HEK293 (cell line): ENCODE measurements at regions of chr3 and their contacts with region 1.

Region 1: DNA sequence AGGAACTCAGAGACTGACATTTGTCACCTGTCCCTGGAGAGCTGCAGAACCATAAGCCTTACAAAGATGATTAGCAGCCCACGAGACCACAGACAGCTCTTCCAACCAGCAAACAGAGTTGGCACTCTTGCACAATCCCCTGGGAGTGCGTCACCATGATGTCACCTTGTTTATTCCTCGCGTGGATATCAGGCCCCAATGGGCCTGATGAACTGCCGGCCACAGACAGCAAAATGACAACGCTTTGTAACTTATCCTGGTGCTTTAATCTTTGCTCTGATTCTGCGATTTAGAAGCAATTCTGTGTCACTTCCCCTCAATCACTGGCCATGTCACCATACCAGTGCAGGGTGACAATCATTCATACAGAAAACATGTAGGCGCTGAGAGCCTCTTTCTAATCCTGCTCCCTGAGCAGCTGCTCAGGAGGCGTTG is 89.2 kb downstream of the TAMM41 start:
- H3K4me3 ChIP-seq: no peak overlapping the region
- H3K27ac ChIP-seq: no peak overlapping the region
- H3K4me1 ChIP-seq: no peaks in the 10 kb centered on the region
- CTCF ChIP-seq: no peak

Region 2: GRCh38 chr3:11643605-11644087 is 113.8 kb before region 1 on chr3 and contains the start of gene VGLL4:
- CTCF ChIA-PET with region 1: interaction called, 5 read pairs
- POLR2A ChIA-PET with region 1: interaction called, 10 read pairs
- H3K4me3 ChIP-seq: peak within 1 kb of the TSS; percentile 86
- H3K27ac ChIP-seq: peak within 1 kb of the TSS; percentile 95
- H3K4me1 ChIP-seq: peaks cover 12% of the 10 kb centered on the region
- CTCF ChIP-seq: no peak

Region 3: DNA sequence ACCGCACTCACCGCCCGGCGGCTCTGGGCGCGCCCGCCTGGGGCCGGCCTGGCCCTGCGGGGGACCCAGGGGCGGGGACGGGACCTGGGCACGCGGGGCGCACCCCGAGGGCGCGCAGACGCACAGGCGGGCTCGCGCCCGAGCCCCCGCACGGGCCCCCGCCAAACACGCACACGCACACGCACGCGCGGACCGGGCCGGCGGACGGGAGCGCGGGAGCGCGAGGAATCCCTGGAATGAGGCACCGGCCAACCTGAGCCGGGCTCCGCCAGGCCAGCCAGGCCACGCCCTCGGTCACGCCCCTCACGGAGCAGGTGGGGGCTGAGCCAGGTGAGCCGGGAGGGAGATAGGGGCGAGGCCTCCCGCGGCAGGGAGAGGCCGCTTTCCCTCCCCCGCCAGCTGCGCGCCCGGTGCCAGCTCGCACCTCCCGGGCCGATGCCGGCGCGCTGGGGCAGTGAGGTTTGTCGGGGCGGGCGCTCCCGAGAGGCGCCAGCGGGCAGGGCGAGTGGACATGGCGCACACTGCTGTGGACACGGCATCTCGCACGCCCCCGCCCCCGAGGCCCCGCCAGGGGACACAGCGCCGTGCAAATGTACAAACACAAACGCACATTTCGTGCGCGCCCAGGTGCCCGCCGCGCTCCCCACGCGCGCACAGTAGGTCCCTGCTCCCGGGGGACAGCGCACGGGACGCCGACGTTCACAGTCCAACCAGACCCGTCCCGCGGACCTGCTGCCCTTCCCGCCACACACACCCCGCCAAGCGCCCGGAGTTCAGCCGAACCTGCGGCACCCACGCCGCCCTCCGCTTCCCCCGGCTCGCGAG is 37.8 kb before region 1 on chr3:
- CTCF ChIA-PET with region 1: no interaction called
- POLR2A ChIA-PET with region 1: no interaction called
- H3K4me3 ChIP-seq: peak overlapping the region; percentile 66
- H3K27ac ChIP-seq: peak overlapping the region; percentile 88
- H3K4me1 ChIP-seq: peaks cover 19% of the 10 kb centered on the region
- CTCF ChIP-seq: peak; percentile 55